ENCODE measurements at regions of chr4 and their contacts with region 1.

Region 1: DNA sequence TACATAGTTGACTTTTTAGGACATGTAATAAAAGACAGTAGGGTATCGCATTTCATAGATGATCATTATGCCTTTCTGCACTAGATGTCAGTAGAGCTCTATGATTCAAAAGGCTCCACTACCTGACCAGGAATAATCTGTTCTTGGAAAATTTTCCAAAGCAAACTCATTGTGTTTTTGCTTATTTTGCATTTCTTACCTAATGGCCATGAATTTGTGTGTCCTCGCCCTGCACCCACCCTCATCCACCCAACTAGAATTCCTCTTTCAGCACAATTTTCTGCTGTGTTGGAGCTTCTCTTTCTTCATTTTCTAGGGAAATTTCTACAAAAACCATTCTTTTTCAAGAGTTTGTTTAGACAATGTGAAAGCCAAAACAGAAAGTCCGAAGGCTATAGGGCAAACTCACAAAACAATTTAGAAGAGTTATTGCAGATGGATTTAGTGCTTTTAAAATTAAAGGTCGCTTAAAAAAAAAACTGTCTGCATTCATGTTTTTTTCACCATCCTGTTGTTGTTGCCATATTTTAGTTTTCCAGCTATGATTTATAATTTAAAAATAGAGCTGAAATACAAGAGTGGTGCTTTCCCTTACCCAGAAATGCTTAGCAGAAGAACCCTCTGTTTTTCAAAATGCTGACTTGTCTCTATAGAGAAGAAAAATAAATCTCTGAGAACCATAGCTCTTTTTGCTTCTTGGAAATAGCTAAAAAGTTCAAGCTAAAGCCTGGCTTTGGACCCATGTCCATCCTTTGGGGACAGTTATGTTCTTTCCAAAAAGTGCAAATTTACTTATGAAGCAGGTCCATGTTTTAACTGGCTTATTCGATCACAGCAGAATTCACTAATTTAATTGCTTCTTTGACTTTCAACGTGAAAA is 183.7 kb downstream of the SPATA18 start:
- DNase-seq: peak; percentile 50
- ATAC-seq: peak; percentile 79
- H3K4me3 ChIP-seq: no peak overlapping the region
- H3K27ac ChIP-seq: no peak overlapping the region
- H3K4me1 ChIP-seq: no peaks in the 10 kb centered on the region
- H3K27me3 ChIP-seq: no peaks in the 10 kb centered on the region
- CTCF ChIP-seq: peak; percentile 67
- EP300 ChIP-seq: no peak
- POLR2A ChIP-seq: no peak
- RAD21 ChIP-seq: peak; percentile 30; the same call in 1 of the 2 replicates

Region 2: GRCh38 chr4:52369649-52370048 is 134.8 kb after region 1 on chr4:
- CTCF ChIA-PET with region 1: no interaction called
- POLR2A ChIA-PET with region 1: no interaction called
- in situ Hi-C with region 1: loop called (anchors 10 kb)
- intact Hi-C with region 1: loop called (anchors 5 kb)
- DNase-seq: peak; percentile 97
- ATAC-seq: peak; percentile 95
- H3K4me3 ChIP-seq: no peak overlapping the region
- H3K27ac ChIP-seq: peak overlapping the region; percentile 64
- H3K4me1 ChIP-seq: peaks cover 37% of the 10 kb centered on the region
- H3K27me3 ChIP-seq: no peaks in the 10 kb centered on the region
- CTCF ChIP-seq: no peak
- EP300 ChIP-seq: peak in 1 of 2 experiments; percentile 85; a peak in 2 of 4 replicates
- POLR2A ChIP-seq: no peak
- RAD21 ChIP-seq: no peak

Region 3: GRCh38 chr4:52376132-52376704 is 141.4 kb after region 1 on chr4:
- CTCF ChIA-PET with region 1: no interaction called
- POLR2A ChIA-PET with region 1: no interaction called
- in situ Hi-C with region 1: loop called (anchors 10 kb)
- intact Hi-C with region 1: no loop called
- DNase-seq: peak; percentile 45
- ATAC-seq: no peak; the same call in 2 of the 3 replicates
- H3K4me3 ChIP-seq: no peak overlapping the region
- H3K27ac ChIP-seq: no peak overlapping the region
- H3K4me1 ChIP-seq: peaks cover 16% of the 10 kb centered on the region
- H3K27me3 ChIP-seq: 0 out of 5 replicates have a peak, but pooled peaks cover 0 to 3% of the 10 kb centered on the region in 2 experiments
- CTCF ChIP-seq: peak; percentile 61
- EP300 ChIP-seq: no peak
- POLR2A ChIP-seq: no peak
- RAD21 ChIP-seq: peak; percentile 16; the same call in 1 of the 2 replicates

Region 4: DNA sequence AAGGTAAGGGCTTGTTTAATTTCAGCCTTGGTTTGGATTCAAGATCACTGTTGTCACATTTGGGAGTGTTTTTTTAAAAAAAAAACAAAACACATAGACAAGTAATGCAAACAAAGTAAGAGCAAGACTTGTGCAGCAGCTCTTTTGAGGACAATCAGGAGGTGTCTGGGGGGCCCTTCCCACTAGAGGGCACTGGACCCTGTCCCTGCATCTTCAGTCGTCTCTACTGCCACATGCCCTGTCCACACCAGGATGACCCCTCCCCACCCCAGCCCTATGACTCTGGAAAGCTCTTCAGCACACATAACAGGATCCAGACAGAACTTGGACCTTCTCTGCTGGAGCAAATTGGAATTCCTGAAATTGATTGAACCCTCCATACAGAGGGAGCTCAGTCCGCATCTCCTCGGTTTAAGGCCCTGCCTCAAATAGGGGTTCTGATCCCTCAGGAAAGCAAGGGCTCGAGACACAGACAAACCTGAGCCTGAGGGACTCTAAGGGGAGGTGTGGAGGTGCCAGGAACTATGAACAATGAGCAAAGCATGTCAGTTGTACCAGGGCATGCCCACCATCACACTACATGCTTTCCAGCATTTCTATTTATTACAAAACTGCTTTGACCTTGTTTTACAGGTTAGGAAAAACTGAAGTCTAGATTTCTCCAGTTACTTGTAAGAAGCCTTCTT is 353.4 kb after region 1 on chr4:
- CTCF ChIA-PET with region 1: no interaction called
- POLR2A ChIA-PET with region 1: no interaction called
- in situ Hi-C with region 1: no loop called
- intact Hi-C with region 1: loop called (anchors 10 kb)
- DNase-seq: peak; percentile 33
- ATAC-seq: peak; percentile 96
- H3K4me3 ChIP-seq: no peak overlapping the region
- H3K27ac ChIP-seq: no peak overlapping the region
- H3K4me1 ChIP-seq: peaks cover 10% of the 10 kb centered on the region
- H3K27me3 ChIP-seq: no peaks in the 10 kb centered on the region
- CTCF ChIP-seq: peak; percentile 78
- EP300 ChIP-seq: no peak
- POLR2A ChIP-seq: no peak
- RAD21 ChIP-seq: no peak

Region 5: DNA sequence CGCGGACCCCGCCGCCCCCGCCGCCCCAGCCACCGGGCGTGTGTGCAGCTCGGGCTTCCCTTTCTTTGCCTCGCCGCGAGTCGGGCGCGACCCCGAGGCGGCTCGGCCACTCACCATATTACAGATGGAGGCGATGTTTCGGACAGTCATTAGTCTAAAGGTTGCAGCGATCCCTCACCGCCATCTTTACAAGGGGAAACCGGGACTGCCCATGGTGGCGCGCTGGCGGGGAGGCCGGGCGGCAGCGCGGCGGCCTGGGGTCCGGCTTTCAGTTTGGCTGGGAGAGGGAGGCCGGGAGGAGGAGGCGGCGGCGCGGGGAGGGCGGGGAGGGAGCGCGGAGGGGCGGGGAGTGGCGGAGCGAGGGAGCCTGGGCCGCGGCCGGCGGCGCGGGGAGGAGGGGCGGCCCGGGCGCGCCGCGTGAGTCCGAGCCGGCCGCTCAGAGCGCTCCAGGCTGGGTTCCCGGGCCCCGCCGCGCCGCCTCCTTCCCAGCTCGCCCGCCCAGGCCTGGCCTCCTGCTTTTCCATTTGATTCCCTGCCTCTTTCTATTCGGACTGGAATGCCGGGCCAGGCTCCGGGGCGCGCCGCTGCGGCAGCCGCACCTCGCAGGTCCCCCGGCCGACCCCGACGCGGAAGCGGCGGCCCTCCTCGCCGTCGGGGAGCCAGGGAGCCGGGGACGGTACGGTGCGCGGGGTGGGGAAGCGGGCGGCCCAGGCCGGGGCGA is 424.4 kb after region 1 on chr4 and contains the start of gene USP46:
- CTCF ChIA-PET with region 1: no interaction called
- POLR2A ChIA-PET with region 1: no interaction called
- in situ Hi-C with region 1: loop called (anchors 10 kb)
- intact Hi-C with region 1: no loop called
- DNase-seq: peak; percentile 44
- ATAC-seq: peak; percentile 92
- H3K4me3 ChIP-seq: peak within 1 kb of the TSS; percentile 69 to 87 (median 79)
- H3K27ac ChIP-seq: peak within 1 kb of the TSS; percentile 78
- H3K4me1 ChIP-seq: peaks cover 43% of the 10 kb centered on the region
- H3K27me3 ChIP-seq: no peaks in the 10 kb centered on the region; a peak in 1 of 5 replicates
- CTCF ChIP-seq: 0 out of 2 replicates have a peak, but pooled peaks have one; percentile 9
- EP300 ChIP-seq: no peak
- POLR2A ChIP-seq: peak; percentile 51 to 55
- RAD21 ChIP-seq: no peak
- total RNA-seq, gene USP46: 17.4 and 26.4 TPM in 2 replicates

Region 6: GRCh38 chr4:52665592-52665991 is 430.8 kb after region 1 on chr4:
- CTCF ChIA-PET with region 1: no interaction called
- POLR2A ChIA-PET with region 1: no interaction called
- in situ Hi-C with region 1: loop called (anchors 10 kb)
- intact Hi-C with region 1: loop called (anchors 5 kb)
- DNase-seq: peak; percentile 43
- ATAC-seq: peak; percentile 88
- H3K4me3 ChIP-seq: no peak overlapping the region
- H3K27ac ChIP-seq: no peak overlapping the region
- H3K4me1 ChIP-seq: peaks cover 27% of the 10 kb centered on the region
- H3K27me3 ChIP-seq: no peaks in the 10 kb centered on the region
- CTCF ChIP-seq: peak; percentile 64
- EP300 ChIP-seq: no peak
- POLR2A ChIP-seq: no peak
- RAD21 ChIP-seq: no peak

Region 7: GRCh38 chr4:54233277-54233696 is 1998.5 kb after region 1 on chr4:
- CTCF ChIA-PET with region 1: interaction called, 8 read pairs
- POLR2A ChIA-PET with region 1: no interaction called
- in situ Hi-C with region 1: no loop called
- intact Hi-C with region 1: loop called (anchors 10 kb)
- DNase-seq: peak; percentile 55
- ATAC-seq: peak; percentile 94
- H3K4me3 ChIP-seq: peak overlapping the region; percentile 45 to 75 (median 52); a peak in 5 of 6 replicates
- H3K27ac ChIP-seq: no peak overlapping the region
- H3K4me1 ChIP-seq: peaks cover 30% of the 10 kb centered on the region; the same call in 1 of the 2 replicates
- H3K27me3 ChIP-seq: peaks cover 14 to 45% of the 10 kb centered on the region in 2 experiments
- CTCF ChIP-seq: peak; percentile 93
- EP300 ChIP-seq: no peak
- POLR2A ChIP-seq: no peak
- RAD21 ChIP-seq: peak; percentile 97